MCF 10A (cell line): ENCODE measurements at regions of chr12 and their contacts with region 1.

Region 1: GRCh38 chr12:68899251-68899771 is 33.7 kb downstream of the CPM start:
- DNase-seq: peak; percentile 84
- H3K4me3 Mint-ChIP-seq: no peak overlapping the region
- H3K27ac Mint-ChIP-seq: peak overlapping the region; percentile 72
- H3K4me1 Mint-ChIP-seq: peaks cover 8% of the 10 kb centered on the region
- H3K27me3 Mint-ChIP-seq: no peaks in the 10 kb centered on the region
- CTCF ChIP-seq: peak; percentile 78

Region 2: GRCh38 chr12:69157023-69157655 is 257.8 kb after region 1 on chr12:
- CTCF ChIA-PET with region 1: interaction called, 11 read pairs
- POLR2A ChIA-PET with region 1: no interaction called
- intact Hi-C with region 1: no loop called
- DNase-seq: peak; percentile 71
- H3K4me3 Mint-ChIP-seq: no peak overlapping the region
- H3K27ac Mint-ChIP-seq: no peak overlapping the region
- H3K4me1 Mint-ChIP-seq: peaks cover 11% of the 10 kb centered on the region
- H3K27me3 Mint-ChIP-seq: no peaks in the 10 kb centered on the region
- CTCF ChIP-seq: peak; percentile 63